ENCODE measurements at regions of chr12 and their contacts with region 1.

Region 1: DNA sequence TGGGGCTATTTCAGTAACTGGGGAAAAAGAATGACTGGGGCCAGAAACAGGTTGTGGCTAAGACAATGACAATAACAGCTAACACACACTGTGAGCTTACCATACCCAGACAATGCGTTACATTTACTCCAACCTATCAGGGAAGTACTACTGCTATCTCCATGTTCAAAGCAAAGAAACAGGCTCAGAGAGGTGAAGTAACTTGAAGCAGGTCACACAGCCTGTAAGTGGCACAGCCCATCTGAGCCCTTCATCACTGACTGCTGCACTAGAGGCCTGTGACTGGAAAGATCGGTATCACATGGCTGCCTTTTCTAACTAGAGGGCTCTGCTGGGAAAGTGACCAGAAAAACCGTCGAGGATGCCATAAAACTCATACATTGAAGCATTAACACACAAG is 7.9 kb downstream of the GCN1 start:
- DNase-seq: no peak
- ATAC-seq: no peak
- H3K4me3 Mint-ChIP-seq: no peak overlapping the region
- H3K27ac Mint-ChIP-seq: peak overlapping the region; percentile 2
- H3K4me1 Mint-ChIP-seq: peaks cover 16% of the 10 kb centered on the region
- H3K27me3 Mint-ChIP-seq: no peaks in the 10 kb centered on the region
- CTCF ChIP-seq: no peak

Region 2: DNA sequence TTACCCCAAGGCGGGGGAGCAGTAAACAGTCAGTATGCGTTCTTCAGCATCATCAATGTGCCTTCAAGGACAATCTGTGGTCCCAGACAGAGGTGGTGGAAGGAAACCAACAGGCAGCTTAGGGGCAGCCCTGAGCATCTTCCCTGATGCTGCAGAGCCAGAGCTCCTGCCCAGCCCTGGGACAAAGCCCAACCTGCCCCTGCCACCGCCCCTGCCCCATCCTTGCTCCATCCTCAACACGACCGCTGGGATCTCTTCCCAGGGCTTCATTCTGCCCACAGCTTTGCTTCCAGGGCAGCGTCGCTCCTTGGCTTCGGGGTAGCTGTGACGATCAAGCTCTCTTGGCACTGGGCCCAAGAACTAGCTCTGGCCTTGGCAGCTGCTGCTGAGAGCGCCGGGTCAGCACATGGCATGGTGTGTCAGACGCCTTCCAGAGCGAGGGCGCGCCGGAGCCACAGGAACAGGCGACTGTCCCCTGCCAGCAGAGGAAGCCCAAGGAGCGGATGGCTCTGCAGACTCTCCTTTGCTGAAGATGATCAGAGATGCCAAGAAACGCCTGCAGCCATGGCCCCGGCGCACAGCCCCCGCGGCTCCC is 86.1 kb before region 1 on chr12:
- CTCF ChIA-PET with region 1: no interaction called
- POLR2A ChIA-PET with region 1: no interaction called
- intact Hi-C with region 1: no loop called
- DNase-seq: no peak
- ATAC-seq: no peak
- H3K4me3 Mint-ChIP-seq: no peak overlapping the region
- H3K27ac Mint-ChIP-seq: no peak overlapping the region
- H3K4me1 Mint-ChIP-seq: peaks cover 15% of the 10 kb centered on the region
- H3K27me3 Mint-ChIP-seq: no peaks in the 10 kb centered on the region
- CTCF ChIP-seq: no peak

Region 3: DNA sequence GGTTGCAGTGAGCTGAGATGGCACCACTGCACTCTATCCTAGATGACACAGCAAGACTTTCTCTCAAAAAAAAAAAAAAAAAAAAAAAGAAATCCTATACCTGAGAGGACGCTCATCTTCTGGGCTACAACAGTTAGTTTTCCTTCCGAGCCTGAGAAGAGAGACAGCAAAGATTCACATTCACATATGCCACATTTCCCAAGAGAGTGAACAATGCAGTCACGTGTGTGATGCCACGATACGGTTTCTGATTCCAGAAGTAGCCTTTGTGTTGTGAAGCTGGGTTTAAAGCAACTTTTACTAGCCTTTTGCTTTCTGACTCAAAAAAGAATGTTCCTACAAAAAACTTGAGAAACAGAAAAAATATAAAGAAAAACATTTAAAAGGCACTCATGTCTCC is 11.6 kb before region 1 on chr12:
- CTCF ChIA-PET with region 1: interaction called, 15 read pairs
- POLR2A ChIA-PET with region 1: interaction called, 5 read pairs
- intact Hi-C with region 1: no loop called
- DNase-seq: no peak
- ATAC-seq: no peak
- H3K4me3 Mint-ChIP-seq: no peak overlapping the region
- H3K27ac Mint-ChIP-seq: no peak overlapping the region
- H3K4me1 Mint-ChIP-seq: no peaks in the 10 kb centered on the region
- H3K27me3 Mint-ChIP-seq: no peaks in the 10 kb centered on the region
- CTCF ChIP-seq: no peak

Measured in activated CD8-positive, alpha-beta T cell treated with anti-CD3 and anti-CD28 coated beads for 36 hours (primary cell).